AG04449 (cell line): ENCODE measurements at regions of chr5 and their contacts with region 1.

Region 1: DNA sequence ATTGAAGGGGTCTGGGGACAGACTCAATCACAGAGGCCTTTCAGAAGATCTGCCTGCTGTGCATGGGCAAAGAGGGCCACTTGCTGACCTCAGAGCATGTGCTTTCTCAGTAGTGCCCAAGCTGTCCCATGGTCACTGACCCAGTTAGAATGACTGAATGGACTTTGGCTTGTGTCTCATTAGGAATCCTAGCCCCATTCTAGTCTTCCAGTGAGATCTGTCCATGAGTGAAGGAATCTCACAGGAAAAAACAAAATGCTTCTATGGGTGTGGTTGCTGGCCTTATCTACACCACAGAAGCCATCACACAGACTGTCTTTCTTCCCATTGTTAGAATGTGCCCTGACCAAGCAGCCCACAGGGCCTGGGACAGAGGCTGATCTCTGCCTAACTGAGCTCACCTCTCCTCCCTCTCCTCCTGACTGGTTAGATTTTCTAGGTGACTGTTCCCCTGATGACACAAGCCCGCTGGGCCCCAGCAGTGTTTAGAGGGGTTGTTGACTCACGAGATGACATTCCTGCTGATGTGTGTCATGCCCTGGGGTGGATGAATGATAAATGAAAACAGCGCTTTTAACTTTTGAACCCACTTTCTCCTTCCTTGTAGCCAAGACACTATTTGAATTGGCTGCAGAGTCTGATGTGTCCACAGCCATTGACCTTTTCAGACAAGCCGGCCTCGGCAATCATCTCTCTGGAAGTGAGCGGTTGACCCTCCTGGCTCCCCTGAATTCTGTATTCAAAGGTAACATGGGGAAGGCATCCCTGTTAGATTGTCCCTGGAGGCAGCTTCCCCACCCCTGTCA is 24.8 kb downstream of the TGFBI start:
- DNase-seq: peak; percentile 87
- H3K4me3 ChIP-seq: no peak overlapping the region
- CTCF ChIP-seq: no peak

Region 2: GRCh38 chr5:136042665-136043121 is 10.8 kb before region 1 on chr5:
- CTCF ChIA-PET with region 1: interaction called, 21 read pairs
- POLR2A ChIA-PET with region 1: interaction called, 8 read pairs
- DNase-seq: no peak
- H3K4me3 ChIP-seq: no peak overlapping the region
- CTCF ChIP-seq: no peak